Ascending aorta (tissue), 2 donors: ENCODE measurements at regions of chr1 and their contacts with region 1.

Region 1: GRCh38 chr1:226736908-226737818 is 1.9 kb downstream of the ITPKB start:
- DNase-seq: peak in 1 of 2 donors; percentile 67
- H3K4me3 ChIP-seq: peak overlapping the region; percentile 87 to 95
- H3K27ac ChIP-seq: peak overlapping the region; percentile 75 to 93
- H3K4me1 ChIP-seq: peaks cover 25 to 48% of the 10 kb centered on the region in 2 donors
- H3K27me3 ChIP-seq: no peaks in the 10 kb centered on the region
- CTCF ChIP-seq: peak in 2 of 3 experiments; percentile 7 to 27

Region 2: GRCh38 chr1:226547754-226548191 is 189.4 kb before region 1 on chr1:
- intact Hi-C with region 1: loop called (anchors 5 kb)
- DNase-seq: peak; percentile 30 to 91
- H3K4me3 ChIP-seq: peak overlapping the region; percentile 65 to 68
- H3K27ac ChIP-seq: no peak overlapping the region
- H3K4me1 ChIP-seq: peaks cover 0 to 18% of the 10 kb centered on the region in 2 donors
- H3K27me3 ChIP-seq: no peaks in the 10 kb centered on the region
- CTCF ChIP-seq: peak; percentile 73 to 92 (median 90)

Region 3: GRCh38 chr1:226596531-226597165 is 140.5 kb before region 1 on chr1:
- intact Hi-C with region 1: no loop called
- DNase-seq: no peak
- H3K4me3 ChIP-seq: no peak overlapping the region
- H3K27ac ChIP-seq: no peak overlapping the region
- H3K4me1 ChIP-seq: no peaks in the 10 kb centered on the region
- H3K27me3 ChIP-seq: no peaks in the 10 kb centered on the region
- CTCF ChIP-seq: no peak

Region 4: DNA sequence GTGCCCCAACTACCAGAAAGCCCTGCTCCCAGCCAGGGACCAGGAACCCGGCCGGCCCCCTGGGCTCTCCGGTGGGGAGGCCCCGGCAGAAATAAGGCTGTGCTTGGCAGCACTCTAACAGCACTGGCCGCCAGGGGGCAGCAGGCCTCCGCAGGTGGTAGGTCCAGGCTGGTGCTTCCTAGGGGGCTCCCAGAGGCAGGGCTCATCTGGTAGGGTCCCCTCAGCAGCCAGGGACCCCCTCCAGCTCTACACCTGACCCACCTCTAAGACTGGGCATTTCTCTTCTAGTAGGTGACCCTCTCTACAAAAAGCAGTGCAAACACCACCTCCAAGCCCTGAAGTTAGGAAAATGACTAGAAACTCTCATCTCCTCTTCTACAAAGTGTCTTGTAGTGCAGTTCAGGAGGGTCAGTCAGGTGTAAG is 103.0 kb before region 1 on chr1:
- intact Hi-C with region 1: loop called (anchors 2 kb)
- DNase-seq: peak; percentile 4 to 89
- H3K4me3 ChIP-seq: no peak overlapping the region
- H3K27ac ChIP-seq: peak overlapping the region; percentile 66 to 76
- H3K4me1 ChIP-seq: peaks cover 3 to 14% of the 10 kb centered on the region in 2 donors
- H3K27me3 ChIP-seq: no peaks in the 10 kb centered on the region
- CTCF ChIP-seq: peak; percentile 82 to 98 (median 94)

Region 5: GRCh38 chr1:226702957-226703831 is 34.0 kb before region 1 on chr1:
- intact Hi-C with region 1: loop called (anchors 2 kb)
- DNase-seq: peak in 1 of 2 donors; percentile 84
- H3K4me3 ChIP-seq: peak overlapping the region; percentile 61 to 85
- H3K27ac ChIP-seq: peak overlapping the region; percentile 96 to 98
- H3K4me1 ChIP-seq: peaks cover 0 to 8% of the 10 kb centered on the region in 2 donors
- H3K27me3 ChIP-seq: no peaks in the 10 kb centered on the region
- CTCF ChIP-seq: no peak

Region 6: GRCh38 chr1:226820941-226821718 is 84.0 kb after region 1 on chr1:
- intact Hi-C with region 1: loop called (anchors 2 kb)
- DNase-seq: peak; percentile 63 to 93
- H3K4me3 ChIP-seq: no peak overlapping the region
- H3K27ac ChIP-seq: peak overlapping the region; percentile 71 to 72
- H3K4me1 ChIP-seq: peaks cover 3 to 8% of the 10 kb centered on the region in 2 donors
- H3K27me3 ChIP-seq: no peaks in the 10 kb centered on the region
- CTCF ChIP-seq: no peak